ENCODE measurements at regions of chr18 and their contacts with region 1.

Region 1: GRCh38 chr18:9474983-9475642 is at the start of gene RALBP1:
- DNase-seq: peak; percentile 99
- H3K4me3 Mint-ChIP-seq: peak within 1 kb of the TSS; percentile 95
- H3K27ac Mint-ChIP-seq: peak within 1 kb of the TSS; percentile 87
- H3K4me1 Mint-ChIP-seq: peaks cover 32% of the 10 kb centered on the region
- H3K27me3 Mint-ChIP-seq: no peaks in the 10 kb centered on the region
- CTCF ChIP-seq: no peak
- total RNA-seq, gene RALBP1: 65.8 and 69.7 TPM in 2 replicates

Region 2: GRCh38 chr18:9422816-9423519 is 52.1 kb before region 1 on chr18:
- CTCF ChIA-PET with region 1: no interaction called
- intact Hi-C with region 1: loop called (anchors 1 kb)
- DNase-seq: peak; percentile 87
- H3K4me3 Mint-ChIP-seq: no peak overlapping the region
- H3K27ac Mint-ChIP-seq: no peak overlapping the region
- H3K4me1 Mint-ChIP-seq: peaks cover 14% of the 10 kb centered on the region
- H3K27me3 Mint-ChIP-seq: no peaks in the 10 kb centered on the region
- CTCF ChIP-seq: no peak

Region 3: GRCh38 chr18:9596226-9596625 is 121.1 kb after region 1 on chr18:
- CTCF ChIA-PET with region 1: no interaction called
- intact Hi-C with region 1: no loop called
- DNase-seq: no peak
- H3K4me3 Mint-ChIP-seq: no peak overlapping the region
- H3K27ac Mint-ChIP-seq: no peak overlapping the region
- H3K4me1 Mint-ChIP-seq: peaks cover 32% of the 10 kb centered on the region
- H3K27me3 Mint-ChIP-seq: no peaks in the 10 kb centered on the region
- CTCF ChIP-seq: no peak

Measured in Calu3 (cell line).